Endothelial cell of umbilical vein (primary cell): ENCODE measurements at regions of chr2 and their contacts with region 1.

Region 1: GRCh38 chr2:71609958-71610357 is 156.6 kb downstream of the DYSF start:
- DNase-seq: peak; percentile 42
- H3K4me3 ChIP-seq: no peak overlapping the region
- H3K27ac ChIP-seq: peak overlapping the region; percentile 59
- H3K4me1 ChIP-seq: peaks cover 32% of the 10 kb centered on the region
- H3K27me3 ChIP-seq: no peaks in the 10 kb centered on the region
- CTCF ChIP-seq: peak in 1 of 2 donors; percentile 27
- POLR2A ChIP-seq: no peak

Region 2: DNA sequence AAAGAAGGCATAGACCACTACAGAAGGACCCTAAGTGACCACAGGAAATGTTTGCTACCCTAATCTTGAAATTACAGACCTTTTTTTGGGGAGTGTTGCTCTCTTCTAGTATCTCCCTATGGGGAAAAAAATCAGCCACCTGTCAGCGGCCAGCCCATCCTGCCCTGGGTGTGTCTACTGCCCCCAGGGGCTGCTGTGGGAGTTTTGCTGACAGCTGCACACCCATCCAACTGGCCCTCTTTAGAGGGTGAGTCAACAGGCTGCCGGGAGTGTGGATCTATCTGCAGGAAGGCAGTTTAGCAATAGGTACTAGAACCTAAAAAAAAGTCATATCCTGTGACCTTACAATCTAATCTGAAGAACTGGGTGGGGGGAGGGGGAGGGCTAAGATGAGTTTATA is 157.4 kb before region 1 on chr2:
- CTCF ChIA-PET with region 1: no interaction called
- POLR2A ChIA-PET with region 1: no interaction called
- dilution Hi-C with region 1: no loop called
- intact Hi-C with region 1: loop called (anchors 10 kb)
- DNase-seq: peak; percentile 42
- H3K4me3 ChIP-seq: no peak overlapping the region
- H3K27ac ChIP-seq: no peak overlapping the region
- H3K4me1 ChIP-seq: peaks cover 47% of the 10 kb centered on the region
- H3K27me3 ChIP-seq: no peaks in the 10 kb centered on the region
- CTCF ChIP-seq: peak; percentile 31 to 36
- POLR2A ChIP-seq: no peak

Region 3: GRCh38 chr2:71545572-71546274 is 64.2 kb before region 1 on chr2:
- CTCF ChIA-PET with region 1: interaction called, 3 read pairs
- POLR2A ChIA-PET with region 1: no interaction called
- dilution Hi-C with region 1: no loop called
- intact Hi-C with region 1: loop called (anchors 1 kb)
- DNase-seq: peak; percentile 74
- H3K4me3 ChIP-seq: peak overlapping the region in 1 of 3 experiments; percentile 7
- H3K27ac ChIP-seq: no peak overlapping the region
- H3K4me1 ChIP-seq: peaks cover 11% of the 10 kb centered on the region
- H3K27me3 ChIP-seq: no peaks in the 10 kb centered on the region
- CTCF ChIP-seq: peak; percentile 64 to 72
- POLR2A ChIP-seq: no peak

Region 4: DNA sequence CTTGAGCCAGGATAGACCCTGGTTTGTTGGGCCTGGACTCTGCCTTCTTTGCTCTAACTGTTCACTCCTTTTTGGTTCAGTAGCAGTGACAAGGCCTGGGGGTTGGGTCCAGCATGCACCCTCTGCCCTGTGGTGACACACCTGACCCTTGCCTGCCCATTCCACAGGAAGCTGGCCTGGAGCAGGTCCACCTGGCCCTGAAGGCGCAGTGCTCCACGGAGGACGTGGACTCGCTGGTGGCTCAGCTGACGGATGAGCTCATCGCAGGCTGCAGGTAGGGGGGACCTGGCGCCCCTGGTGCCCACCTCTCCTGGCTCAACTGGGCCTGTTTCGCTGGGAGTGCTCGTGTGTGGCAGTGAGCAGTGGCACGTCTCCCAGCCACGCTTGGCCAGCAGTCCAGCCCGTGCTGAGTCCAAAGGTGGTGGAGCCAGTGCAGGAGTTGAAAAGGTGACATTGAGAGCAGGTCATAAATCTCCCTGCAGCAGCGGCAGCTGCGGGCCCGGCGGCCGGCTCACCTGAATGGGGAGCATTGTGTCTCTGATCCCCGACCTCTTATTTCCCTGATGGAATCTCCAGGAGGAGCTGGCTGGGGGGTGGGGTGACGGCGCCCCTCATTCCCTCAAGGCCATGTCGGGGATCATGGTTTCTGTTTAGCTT is 54.0 kb before region 1 on chr2:
- CTCF ChIA-PET with region 1: no interaction called
- POLR2A ChIA-PET with region 1: no interaction called
- dilution Hi-C with region 1: no loop called
- intact Hi-C with region 1: loop called (anchors 2 kb)
- DNase-seq: no peak
- H3K4me3 ChIP-seq: no peak overlapping the region
- H3K27ac ChIP-seq: no peak overlapping the region
- H3K4me1 ChIP-seq: peaks cover 10% of the 10 kb centered on the region
- H3K27me3 ChIP-seq: no peaks in the 10 kb centered on the region
- CTCF ChIP-seq: no peak
- POLR2A ChIP-seq: no peak

Region 5: GRCh38 chr2:71873594-71873993 is 263.6 kb after region 1 on chr2:
- CTCF ChIA-PET with region 1: no interaction called
- POLR2A ChIA-PET with region 1: no interaction called
- dilution Hi-C with region 1: no loop called
- intact Hi-C with region 1: loop called (anchors 5 kb)
- DNase-seq: no peak
- H3K4me3 ChIP-seq: no peak overlapping the region
- H3K27ac ChIP-seq: no peak overlapping the region
- H3K4me1 ChIP-seq: no peaks in the 10 kb centered on the region
- H3K27me3 ChIP-seq: peaks cover 7 to 10% of the 10 kb centered on the region in 2 experiments
- CTCF ChIP-seq: no peak
- POLR2A ChIP-seq: no peak

Region 6: GRCh38 chr2:72561621-72562318 is 951.8 kb after region 1 on chr2:
- CTCF ChIA-PET with region 1: no interaction called
- POLR2A ChIA-PET with region 1: no interaction called
- dilution Hi-C with region 1: no loop called
- intact Hi-C with region 1: loop called (anchors 2 kb)
- DNase-seq: peak; percentile 78
- H3K4me3 ChIP-seq: peak overlapping the region in 1 of 3 experiments; percentile 35
- H3K27ac ChIP-seq: peak overlapping the region; percentile 92
- H3K4me1 ChIP-seq: peaks cover 35% of the 10 kb centered on the region
- H3K27me3 ChIP-seq: no peaks in the 10 kb centered on the region
- CTCF ChIP-seq: no peak
- POLR2A ChIP-seq: no peak